CD4-positive, alpha-beta memory T cell (primary cell): ENCODE measurements at regions of chr2 and their contacts with region 1.

Region 1: GRCh38 chr2:8743261-8743660 is 61.4 kb downstream of the ID2 start:
- DNase-seq: no peak
- H3K4me3 ChIP-seq: no peak overlapping the region
- H3K4me3 Mint-ChIP-seq: no peak overlapping the region
- H3K27ac ChIP-seq: no peak overlapping the region
- H3K27ac Mint-ChIP-seq: peak overlapping the region in 1 of 7 donors; percentile 17
- H3K4me1 ChIP-seq: no peaks in the 10 kb centered on the region
- H3K4me1 Mint-ChIP-seq: peaks cover 0 to 2% (median under 1%) of the 10 kb centered on the region in 4 donors
- H3K27me3 ChIP-seq: no peaks in the 10 kb centered on the region
- H3K27me3 Mint-ChIP-seq: no peaks in the 10 kb centered on the region

Region 2: GRCh38 chr2:8681786-8682692 is 61.2 kb before region 1 on chr2 and contains the start of gene ID2:
- CTCF ChIA-PET with region 1: no interaction called
- POLR2A ChIA-PET with region 1: no interaction called
- intact Hi-C with region 1: no loop called
- DNase-seq: peak; percentile 98 to 99 (median 98)
- H3K4me3 ChIP-seq: peak within 1 kb of the TSS; percentile 82 to 85
- H3K4me3 Mint-ChIP-seq: peak within 1 kb of the TSS; percentile 94 to 100 (median 99)
- H3K27ac ChIP-seq: peak within 1 kb of the TSS; percentile 74
- H3K27ac Mint-ChIP-seq: peak within 1 kb of the TSS; percentile 90 to 97 (median 96)
- H3K4me1 ChIP-seq: peaks cover 41% of the 10 kb centered on the region
- H3K4me1 Mint-ChIP-seq: peaks cover 32 to 61% (median 37%) of the 10 kb centered on the region in 4 donors
- H3K27me3 ChIP-seq: no peaks in the 10 kb centered on the region
- H3K27me3 Mint-ChIP-seq: peaks cover 9 to 18% of the 10 kb centered on the region in 2 donors
- total RNA-seq, gene ID2: 50.8 to 56.4 TPM

Region 3: GRCh38 chr2:8729939-8730338 is 13.3 kb before region 1 on chr2:
- CTCF ChIA-PET with region 1: interaction called, 12 read pairs
- POLR2A ChIA-PET with region 1: no interaction called
- intact Hi-C with region 1: no loop called
- DNase-seq: no peak
- H3K4me3 ChIP-seq: no peak overlapping the region
- H3K4me3 Mint-ChIP-seq: no peak overlapping the region
- H3K27ac ChIP-seq: no peak overlapping the region
- H3K27ac Mint-ChIP-seq: no peak overlapping the region
- H3K4me1 ChIP-seq: no peaks in the 10 kb centered on the region
- H3K4me1 Mint-ChIP-seq: no peaks in the 10 kb centered on the region
- H3K27me3 ChIP-seq: no peaks in the 10 kb centered on the region
- H3K27me3 Mint-ChIP-seq: no peaks in the 10 kb centered on the region